OCI-LY7 (cell line): ENCODE measurements at regions of chr7 and their contacts with region 1.

Region 1: GRCh38 chr7:100049441-100050311 is at the start of gene ZSCAN21:
- DNase-seq: peak; percentile 84
- H3K4me3 ChIP-seq: peak within 1 kb of the TSS; percentile 89
- H3K27ac ChIP-seq: peak within 1 kb of the TSS; percentile 56
- H3K4me1 ChIP-seq: peaks cover 14% of the 10 kb centered on the region
- CTCF ChIP-seq: peak; percentile 63
- total RNA-seq, gene ZSCAN21: 5.6 and 9.7 TPM in 2 replicates

Region 2: GRCh38 chr7:99910976-99911375 is 138.7 kb before region 1 on chr7:
- CTCF ChIA-PET with region 1: no interaction called
- POLR2A ChIA-PET with region 1: no interaction called
- intact Hi-C with region 1: loop called (anchors 5 kb)
- DNase-seq: no peak
- H3K4me3 ChIP-seq: no peak overlapping the region
- H3K27ac ChIP-seq: no peak overlapping the region
- H3K4me1 ChIP-seq: peaks cover 4% of the 10 kb centered on the region
- CTCF ChIP-seq: no peak

Region 3: DNA sequence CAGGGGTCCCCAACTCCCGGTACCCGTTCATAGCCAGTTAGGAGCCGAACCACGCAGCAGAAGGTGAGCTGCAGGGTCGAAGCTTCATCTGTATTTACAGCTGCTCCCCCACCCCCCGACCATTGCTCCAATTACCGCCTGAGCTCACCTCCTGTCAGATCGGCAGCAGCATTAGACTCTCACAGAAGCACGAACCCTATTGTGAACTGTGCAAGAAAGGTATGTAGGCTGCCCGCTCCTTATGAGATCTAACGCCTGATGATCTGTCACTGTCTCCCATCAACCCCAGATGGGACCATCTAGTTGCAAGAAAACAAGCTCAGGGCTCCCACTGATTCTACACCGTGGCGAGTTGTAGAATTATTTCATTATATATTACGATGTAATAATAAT is 59.2 kb before region 1 on chr7:
- CTCF ChIA-PET with region 1: no interaction called
- POLR2A ChIA-PET with region 1: no interaction called
- intact Hi-C with region 1: loop called (anchors 5 kb)
- DNase-seq: no peak
- H3K4me3 ChIP-seq: no peak overlapping the region
- H3K27ac ChIP-seq: no peak overlapping the region
- H3K4me1 ChIP-seq: no peaks in the 10 kb centered on the region
- CTCF ChIP-seq: no peak

Region 4: DNA sequence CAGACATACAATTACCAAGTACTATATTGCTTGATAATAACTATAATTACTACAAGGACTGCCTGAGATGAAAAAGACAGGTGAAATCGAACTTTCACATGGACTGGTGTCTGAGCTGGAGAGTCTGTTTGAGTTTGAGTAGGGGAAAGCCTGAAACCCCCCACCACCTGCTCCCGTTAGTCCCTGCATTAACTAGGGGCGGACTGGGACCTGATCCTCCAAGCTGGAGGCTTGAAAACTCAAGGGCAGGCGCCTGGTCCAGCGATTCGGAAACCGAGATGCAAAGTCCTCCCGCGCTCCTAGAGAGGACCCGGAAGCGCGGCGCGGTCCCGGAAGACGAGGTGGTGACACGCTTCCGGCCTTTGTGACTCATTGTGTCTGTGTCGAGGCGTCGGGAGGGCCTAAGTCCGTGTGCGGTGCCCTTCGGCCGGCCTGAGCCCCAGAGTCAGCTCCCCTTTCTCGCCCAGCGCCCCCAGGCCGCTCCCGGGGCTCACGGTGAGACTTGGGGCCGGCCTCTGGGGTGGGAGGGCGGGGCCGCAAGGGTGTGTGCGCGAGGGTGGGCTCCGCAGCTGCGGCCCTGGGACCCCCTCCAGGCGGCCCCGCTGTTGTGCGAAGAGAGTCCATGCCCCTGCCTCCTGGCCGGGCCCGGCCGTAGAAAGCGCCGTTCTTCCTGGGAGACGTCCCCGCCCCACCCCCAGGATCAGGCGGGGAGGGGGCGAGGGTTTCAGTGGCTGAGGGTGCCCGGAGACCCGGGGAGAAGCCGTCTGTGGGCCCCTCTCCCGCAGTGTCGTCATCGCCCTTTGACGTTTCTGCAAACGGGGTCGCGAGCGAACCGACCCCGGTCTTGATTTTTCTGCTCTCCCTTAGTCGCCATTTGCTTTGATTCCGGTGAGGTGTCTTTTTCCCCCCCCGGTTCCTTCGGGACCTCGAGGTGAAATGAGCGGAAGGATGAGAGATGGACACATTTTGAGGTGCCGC is 34.2 kb before region 1 on chr7 and contains the start of gene ZKSCAN1:
- CTCF ChIA-PET with region 1: no interaction called
- POLR2A ChIA-PET with region 1: interaction called, 8 read pairs
- intact Hi-C with region 1: loop called (anchors 2 kb)
- DNase-seq: peak; percentile 95
- H3K4me3 ChIP-seq: peak within 1 kb of the TSS; percentile 100
- H3K27ac ChIP-seq: peak within 1 kb of the TSS; percentile 22
- H3K4me1 ChIP-seq: peaks cover 20% of the 10 kb centered on the region
- CTCF ChIP-seq: no peak
- total RNA-seq, gene ZKSCAN1: 20.2 and 21.4 TPM in 2 replicates

Region 5: GRCh38 chr7:100081535-100082102 is 31.9 kb after region 1 on chr7 and contains the start of gene ZNF3:
- CTCF ChIA-PET with region 1: no interaction called
- POLR2A ChIA-PET with region 1: interaction called, 6 read pairs
- intact Hi-C with region 1: loop called (anchors 1 kb)
- DNase-seq: peak; percentile 97
- H3K4me3 ChIP-seq: peak within 1 kb of the TSS; percentile 73
- H3K27ac ChIP-seq: peak within 1 kb of the TSS; percentile 64
- H3K4me1 ChIP-seq: peaks cover 22% of the 10 kb centered on the region
- CTCF ChIP-seq: peak; percentile 96
- total RNA-seq, gene ZNF3: 19.8 and 21.8 TPM in 2 replicates

Region 6: GRCh38 chr7:100137851-100138760 is 88.4 kb after region 1 on chr7:
- CTCF ChIA-PET with region 1: no interaction called
- POLR2A ChIA-PET with region 1: no interaction called
- intact Hi-C with region 1: no loop called
- DNase-seq: peak; percentile 84
- H3K4me3 ChIP-seq: peak overlapping the region; percentile 40
- H3K27ac ChIP-seq: peak overlapping the region; percentile 71
- H3K4me1 ChIP-seq: peaks cover 35% of the 10 kb centered on the region
- CTCF ChIP-seq: no peak